T-cell (primary cell): ENCODE measurements at regions of chr9 and their contacts with region 1.

Region 1: GRCh38 chr9:73132034-73132776 is 19.5 kb upstream of the ANXA1 start:
- DNase-seq: peak; percentile 26 to 88 (median 72)
- ATAC-seq: peak; percentile 92 to 96 (median 96)
- H3K4me3 ChIP-seq: peak overlapping the region; percentile 54 to 60
- H3K4me3 Mint-ChIP-seq: peak overlapping the region; percentile 81 to 88 (median 84)
- H3K27ac ChIP-seq: peak overlapping the region; percentile 94
- H3K27ac Mint-ChIP-seq: peak overlapping the region; percentile 95 to 97
- H3K4me1 ChIP-seq: peaks cover 3 to 8% of the 10 kb centered on the region in 2 experiments
- H3K4me1 Mint-ChIP-seq: peaks cover 18 to 54% (median 28%) of the 10 kb centered on the region in 3 donors
- H3K27me3 ChIP-seq: no peaks in the 10 kb centered on the region
- H3K27me3 Mint-ChIP-seq: no peaks in the 10 kb centered on the region

Region 2: GRCh38 chr9:72907421-72907820 is 224.8 kb before region 1 on chr9:
- CTCF ChIA-PET with region 1: no interaction called
- POLR2A ChIA-PET with region 1: no interaction called
- DNase-seq: no peak
- ATAC-seq: no peak
- H3K4me3 ChIP-seq: no peak overlapping the region
- H3K4me3 Mint-ChIP-seq: no peak overlapping the region
- H3K27ac ChIP-seq: no peak overlapping the region
- H3K27ac Mint-ChIP-seq: no peak overlapping the region
- H3K4me1 ChIP-seq: no peaks in the 10 kb centered on the region
- H3K4me1 Mint-ChIP-seq: no peaks in the 10 kb centered on the region
- H3K27me3 ChIP-seq: no peaks in the 10 kb centered on the region
- H3K27me3 Mint-ChIP-seq: peaks cover 3% of the 10 kb centered on the region in 2 donors

Region 3: GRCh38 chr9:73143606-73144328 is 11.6 kb after region 1 on chr9:
- CTCF ChIA-PET with region 1: interaction called, 3 to 5 read pairs
- POLR2A ChIA-PET with region 1: interaction called in 1 of 2 experiments, 11 read pairs
- DNase-seq: no peak
- ATAC-seq: no peak
- H3K4me3 ChIP-seq: no peak overlapping the region
- H3K4me3 Mint-ChIP-seq: no peak overlapping the region
- H3K27ac ChIP-seq: no peak overlapping the region
- H3K27ac Mint-ChIP-seq: peak overlapping the region in 1 of 2 donors; percentile 3
- H3K4me1 ChIP-seq: peaks cover 0 to under 1% of the 10 kb centered on the region in 2 experiments
- H3K4me1 Mint-ChIP-seq: peaks cover 11 to 25% (median 17%) of the 10 kb centered on the region in 3 donors
- H3K27me3 ChIP-seq: no peaks in the 10 kb centered on the region
- H3K27me3 Mint-ChIP-seq: peaks cover 0 to 1% of the 10 kb centered on the region in 2 donors

Region 4: DNA sequence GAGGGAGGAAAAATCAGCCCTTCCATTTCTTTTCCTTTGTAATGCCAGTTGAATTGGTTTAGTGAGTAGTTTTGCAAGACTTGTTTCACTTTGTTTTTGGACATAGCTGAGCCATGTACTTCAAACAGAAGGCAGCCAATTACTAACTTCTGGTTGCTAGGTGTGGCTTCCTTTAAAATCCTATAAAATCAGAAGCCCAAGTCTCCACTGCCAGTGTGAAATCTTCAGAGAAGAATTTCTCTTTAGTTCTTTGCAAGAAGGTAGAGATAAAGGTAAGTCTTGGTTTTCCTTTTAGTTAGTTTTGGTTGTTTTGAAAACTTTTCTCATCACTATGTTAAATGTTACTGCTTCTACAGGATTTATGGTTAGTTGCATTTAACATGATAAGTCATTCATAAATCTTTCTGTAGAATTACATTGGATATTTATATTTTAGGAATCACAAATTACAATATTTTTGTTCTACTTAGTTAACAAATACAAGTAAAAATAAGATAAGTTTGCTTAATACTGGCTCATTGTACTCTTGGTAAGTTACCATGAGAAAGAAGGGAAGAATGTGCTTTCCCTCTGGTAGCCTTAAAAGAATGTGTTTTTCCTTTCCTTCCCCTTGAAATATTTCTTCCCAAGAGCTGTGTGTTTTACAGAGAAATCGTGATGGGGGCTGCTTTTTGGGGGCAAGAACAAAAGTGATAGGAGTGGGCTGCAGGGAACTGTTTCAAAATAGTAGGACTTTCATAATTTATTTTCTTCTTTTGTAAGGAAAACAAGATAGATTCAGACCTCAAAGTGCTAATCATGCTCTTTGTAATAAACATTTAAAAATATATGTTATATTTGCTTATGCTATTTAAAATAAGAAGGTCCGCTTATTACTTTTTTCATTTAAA is 19.7 kb after region 1 on chr9 and contains the start of gene ANXA1:
- CTCF ChIA-PET with region 1: interaction called, 6 to 17 read pairs
- POLR2A ChIA-PET with region 1: interaction called, 5 to 69 read pairs
- DNase-seq: peak in 4 of 35 experiments; percentile 14 to 74 (median 30)
- ATAC-seq: peak; percentile 33 to 77 (median 54)
- H3K4me3 ChIP-seq: peak within 1 kb of the TSS; percentile 63 to 64
- H3K4me3 Mint-ChIP-seq: peak within 1 kb of the TSS; percentile 87 to 98 (median 91)
- H3K27ac ChIP-seq: peak within 1 kb of the TSS; percentile 90
- H3K27ac Mint-ChIP-seq: peak within 1 kb of the TSS; percentile 91 to 94
- H3K4me1 ChIP-seq: peaks cover 17 to 62% of the 10 kb centered on the region in 2 experiments
- H3K4me1 Mint-ChIP-seq: peaks cover 69 to 85% (median 74%) of the 10 kb centered on the region in 3 donors
- H3K27me3 ChIP-seq: no peaks in the 10 kb centered on the region
- H3K27me3 Mint-ChIP-seq: peaks cover 0 to 1% of the 10 kb centered on the region in 2 donors
- total RNA-seq, gene ANXA1: 173 to 570 (median 200) TPM

Region 5: GRCh38 chr9:73548201-73548600 is 416.0 kb after region 1 on chr9:
- CTCF ChIA-PET with region 1: no interaction called
- POLR2A ChIA-PET with region 1: no interaction called
- DNase-seq: no peak
- ATAC-seq: no peak
- H3K4me3 ChIP-seq: no peak overlapping the region
- H3K4me3 Mint-ChIP-seq: no peak overlapping the region
- H3K27ac ChIP-seq: no peak overlapping the region
- H3K27ac Mint-ChIP-seq: no peak overlapping the region
- H3K4me1 ChIP-seq: no peaks in the 10 kb centered on the region
- H3K4me1 Mint-ChIP-seq: no peaks in the 10 kb centered on the region
- H3K27me3 ChIP-seq: no peaks in the 10 kb centered on the region
- H3K27me3 Mint-ChIP-seq: no peaks in the 10 kb centered on the region